ENCODE measurements at regions of chr1 and their contacts with region 1.

Region 1: GRCh38 chr1:9425859-9426258 is 113.4 kb upstream of the SLC25A33 start:
- DNase-seq: no peak
- H3K4me3 Mint-ChIP-seq: peak overlapping the region; percentile 57
- H3K27ac Mint-ChIP-seq: no peak overlapping the region
- H3K4me1 Mint-ChIP-seq: peaks cover 59% of the 10 kb centered on the region
- H3K27me3 Mint-ChIP-seq: peaks cover 43% of the 10 kb centered on the region

Region 2: DNA sequence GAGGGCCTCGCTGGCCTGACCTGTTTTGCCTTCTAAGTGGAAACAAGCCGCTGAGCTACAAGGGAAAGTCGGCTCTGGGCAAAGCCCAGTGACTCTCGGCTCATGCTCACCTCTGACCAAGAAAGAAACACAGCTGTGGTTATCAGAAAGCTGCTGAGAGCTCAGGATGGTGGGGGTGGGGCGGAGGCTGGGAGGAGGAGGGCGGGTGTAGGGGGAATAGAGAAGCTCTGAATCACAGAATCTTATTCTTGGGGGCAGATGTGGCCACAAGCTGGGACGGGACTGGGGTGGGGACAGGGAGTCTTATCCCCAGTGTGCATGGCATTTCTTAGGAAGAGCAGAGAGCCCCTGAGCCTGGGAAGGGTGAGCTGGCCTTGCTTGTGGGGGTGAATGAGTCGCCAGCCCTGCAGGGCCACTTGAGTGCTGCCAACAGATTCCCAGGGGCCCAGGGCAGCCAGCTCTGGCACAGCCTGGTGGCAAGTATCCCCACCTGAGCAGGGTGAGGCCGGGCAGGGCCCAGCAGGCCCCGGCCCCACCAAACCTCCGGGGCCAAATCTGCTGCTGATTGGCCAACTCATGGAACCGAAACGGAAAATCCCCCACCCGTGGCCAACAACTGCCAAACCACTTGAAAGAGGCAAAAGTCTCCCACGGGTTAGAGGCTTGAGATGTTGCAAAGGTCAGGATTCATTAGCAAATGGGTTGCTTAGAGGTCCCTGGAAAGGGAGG is 12.5 kb before region 1 on chr1:
- CTCF ChIA-PET with region 1: interaction called, 34 read pairs
- POLR2A ChIA-PET with region 1: interaction called, 3 read pairs
- DNase-seq: peak; percentile 46
- H3K4me3 Mint-ChIP-seq: no peak overlapping the region
- H3K27ac Mint-ChIP-seq: no peak overlapping the region
- H3K4me1 Mint-ChIP-seq: peaks cover 48% of the 10 kb centered on the region
- H3K27me3 Mint-ChIP-seq: peaks cover 7% of the 10 kb centered on the region

Region 3: GRCh38 chr1:9466780-9467758 is 41.2 kb after region 1 on chr1:
- CTCF ChIA-PET with region 1: no interaction called
- POLR2A ChIA-PET with region 1: no interaction called
- DNase-seq: no peak
- H3K4me3 Mint-ChIP-seq: no peak overlapping the region
- H3K27ac Mint-ChIP-seq: no peak overlapping the region
- H3K4me1 Mint-ChIP-seq: no peaks in the 10 kb centered on the region
- H3K27me3 Mint-ChIP-seq: peaks cover 6% of the 10 kb centered on the region

Measured in activated CD4-positive, alpha-beta T cell treated with anti-CD3 and anti-CD28 coated beads, Interleukin-2, amount 10 ng/mL, durations not matched to agents 7 days and 5 days (primary cell).